Ovary (tissue), 10 donors: ENCODE measurements at regions of chr9 and their contacts with region 1.

Region 1: DNA sequence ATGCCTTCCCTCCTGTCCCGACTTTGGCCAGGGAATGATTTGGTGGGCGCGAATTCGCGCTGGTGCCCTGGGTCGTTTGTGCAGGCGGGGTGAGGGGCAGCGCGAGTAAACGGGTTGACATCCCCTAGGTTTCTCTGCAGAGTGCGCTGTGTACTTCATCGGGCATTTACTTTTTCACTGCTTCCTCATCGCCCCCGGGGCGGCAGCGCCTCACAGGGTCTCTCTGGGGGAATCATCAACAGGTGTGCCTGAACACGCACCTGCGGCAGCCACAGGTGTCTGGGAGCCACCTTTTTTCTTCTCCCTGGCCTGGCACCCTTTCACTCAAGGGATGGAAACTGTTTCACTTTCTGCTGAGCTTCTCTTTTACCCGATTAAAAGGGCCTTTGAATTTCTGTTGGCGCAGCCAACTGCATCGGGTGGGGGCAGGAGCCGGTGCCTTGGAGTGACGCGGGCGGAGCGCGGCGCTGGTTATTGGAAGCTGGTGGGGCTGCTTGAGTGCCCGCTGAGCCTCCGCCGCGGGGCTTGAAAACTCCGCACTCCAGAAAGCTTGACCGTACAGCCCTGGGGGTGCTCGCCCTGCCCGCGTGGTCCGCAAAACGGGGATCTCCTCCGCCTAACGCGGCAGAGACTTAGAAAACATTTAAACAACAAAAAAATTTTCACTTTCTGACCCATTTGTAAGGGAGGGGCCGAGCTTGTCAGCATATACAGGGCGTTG is 52.1 kb upstream of the TJP2 start:
- DNase-seq: peak; percentile 65 to 78 (median 69)
- H3K4me3 ChIP-seq: peak overlapping the region; percentile 70
- H3K27ac ChIP-seq: peak overlapping the region; percentile 64 to 71
- H3K4me1 ChIP-seq: peaks cover 2% of the 10 kb centered on the region
- H3K27me3 ChIP-seq: no peaks in the 10 kb centered on the region
- CTCF ChIP-seq: no peak
- EP300 ChIP-seq: no peak
- POLR2A ChIP-seq: no peak

Region 2: DNA sequence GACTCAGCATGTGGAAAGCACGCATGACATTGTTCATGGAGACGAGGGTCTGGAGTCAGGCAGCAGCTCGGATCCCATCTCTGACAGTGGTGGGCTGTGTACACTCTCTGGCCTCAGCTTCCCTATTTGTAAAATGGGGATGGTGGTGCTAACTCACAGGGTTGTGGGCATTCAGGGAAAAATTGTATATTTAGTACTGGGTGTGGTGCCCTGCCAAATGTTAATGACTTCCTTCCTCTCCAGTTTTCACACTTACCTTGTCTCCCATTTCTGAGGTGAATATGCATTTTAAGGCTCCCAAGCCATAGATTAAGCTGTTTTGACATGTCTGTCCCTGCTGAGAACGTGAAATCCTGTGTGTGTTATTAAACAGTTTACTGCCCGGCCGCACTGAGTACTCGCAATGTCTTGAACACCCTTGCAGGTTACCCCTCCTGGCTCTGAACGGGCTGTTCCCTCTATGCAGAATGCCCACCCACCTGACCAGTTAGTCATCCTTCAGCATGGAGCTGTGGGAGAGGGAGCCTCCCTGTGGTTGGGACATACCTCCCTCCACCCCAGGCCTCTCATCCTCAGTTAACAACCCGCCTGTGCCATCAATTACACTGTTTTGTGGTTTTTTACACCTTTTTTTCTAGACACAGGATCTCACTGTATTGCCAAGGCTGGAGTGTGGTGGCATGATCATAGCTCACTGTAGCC is 77.9 kb after region 1 on chr9:
- intact Hi-C with region 1: loop called in 1 of 4 experiments (anchors 10 kb)
- DNase-seq: peak in 2 of 5 donors; percentile 71
- H3K4me3 ChIP-seq: no peak overlapping the region
- H3K27ac ChIP-seq: peak overlapping the region in 1 of 2 donors; percentile 46
- H3K4me1 ChIP-seq: peaks cover 20% of the 10 kb centered on the region
- H3K27me3 ChIP-seq: no peaks in the 10 kb centered on the region
- CTCF ChIP-seq: no peak
- EP300 ChIP-seq: no peak
- POLR2A ChIP-seq: no peak